Endothelial cell of umbilical vein (primary cell): ENCODE measurements at regions of chr2 and their contacts with region 1.

Region 1: DNA sequence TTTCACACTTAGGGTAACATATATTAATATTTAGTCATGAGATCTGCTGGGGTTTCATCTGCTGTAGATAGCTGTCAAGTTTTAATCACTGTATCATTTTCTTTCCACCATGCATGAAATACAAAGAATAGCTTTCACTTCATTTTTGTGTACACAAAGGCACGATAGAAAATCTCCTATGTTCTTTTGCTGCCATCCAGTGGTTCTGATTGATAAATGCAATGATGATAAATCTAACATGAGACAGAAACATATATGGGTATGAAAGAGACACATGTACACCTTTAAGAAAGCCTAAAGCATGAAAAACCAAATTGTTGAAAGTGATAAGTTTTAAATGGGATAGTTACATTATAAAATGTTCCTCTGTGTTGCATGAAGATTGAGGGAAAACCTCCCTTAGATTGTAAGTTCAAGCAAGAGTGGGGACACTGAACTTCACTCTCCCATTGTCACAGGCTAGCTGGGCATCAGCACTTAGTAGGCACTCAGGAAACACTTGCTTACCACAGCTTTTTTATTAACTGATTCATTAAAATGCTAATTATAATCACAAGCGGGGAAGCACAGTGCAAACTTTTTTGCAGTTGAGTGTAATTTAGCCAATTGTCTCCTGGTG is 31.2 kb downstream of the C1D start:
- DNase-seq: peak; percentile 79
- H3K4me3 ChIP-seq: no peak overlapping the region
- H3K27ac ChIP-seq: no peak overlapping the region
- H3K4me1 ChIP-seq: peaks cover 6% of the 10 kb centered on the region
- H3K27me3 ChIP-seq: no peaks in the 10 kb centered on the region
- CTCF ChIP-seq: peak; percentile 19 to 34
- POLR2A ChIP-seq: no peak

Region 2: GRCh38 chr2:66429071-66429477 is 1602.6 kb before region 1 on chr2:
- CTCF ChIA-PET with region 1: interaction called, 27 read pairs
- POLR2A ChIA-PET with region 1: no interaction called
- dilution Hi-C with region 1: no loop called
- intact Hi-C with region 1: loop called (anchors 5 kb)
- DNase-seq: peak; percentile 74
- H3K4me3 ChIP-seq: no peak overlapping the region
- H3K27ac ChIP-seq: no peak overlapping the region
- H3K4me1 ChIP-seq: peaks cover 9% of the 10 kb centered on the region
- H3K27me3 ChIP-seq: peaks cover 46 to 50% of the 10 kb centered on the region in 2 experiments
- CTCF ChIP-seq: peak; percentile 78
- POLR2A ChIP-seq: no peak

Region 3: DNA sequence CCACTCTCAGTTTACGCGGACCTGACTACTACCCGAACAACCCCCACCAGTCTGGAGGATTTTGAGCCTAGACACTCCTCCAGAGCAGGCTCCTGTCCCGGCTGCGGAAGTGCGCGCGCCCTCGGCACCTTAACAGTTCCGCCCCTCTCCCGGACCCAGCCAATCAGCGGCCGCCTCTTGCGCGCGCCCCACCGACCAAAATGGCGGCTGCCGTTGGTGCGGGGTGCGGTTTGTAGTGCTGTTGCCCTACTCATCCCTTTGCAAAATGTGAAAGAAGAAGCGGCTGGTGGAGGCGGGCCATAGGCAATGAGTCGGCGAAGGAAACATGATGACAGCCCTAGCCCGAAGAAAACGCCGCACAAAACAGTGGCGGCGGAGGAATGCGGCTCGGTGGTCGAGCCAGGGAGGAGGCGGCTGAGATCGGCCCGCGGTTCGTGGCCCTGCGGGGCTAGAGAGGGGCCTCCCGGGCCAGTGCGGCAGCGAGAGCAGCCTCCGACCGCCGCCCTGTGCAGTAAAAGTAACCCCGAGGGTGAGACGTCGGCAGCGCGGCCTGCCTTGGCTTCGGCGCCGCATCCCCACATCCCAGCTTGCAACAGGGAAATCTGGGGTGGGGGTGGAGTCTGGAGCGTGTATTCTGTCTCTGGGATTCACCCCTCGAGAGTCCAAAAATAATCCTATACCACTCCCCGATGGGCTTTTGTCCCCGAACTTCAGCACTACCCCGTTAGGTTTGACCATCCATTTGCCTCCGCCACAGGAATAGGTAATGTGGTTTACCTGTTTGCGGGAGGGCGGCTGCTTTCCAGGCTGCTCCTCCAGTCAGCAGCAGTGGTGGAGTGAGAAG is 634.3 kb before region 1 on chr2 and contains the start of gene ETAA1:
- CTCF ChIA-PET with region 1: interaction called, 7 read pairs
- POLR2A ChIA-PET with region 1: no interaction called
- dilution Hi-C with region 1: no loop called
- intact Hi-C with region 1: loop called (anchors 5 kb)
- DNase-seq: peak; percentile 88
- H3K4me3 ChIP-seq: peak within 1 kb of the TSS; percentile 89 to 93 (median 90)
- H3K27ac ChIP-seq: peak within 1 kb of the TSS; percentile 83
- H3K4me1 ChIP-seq: peaks cover 65% of the 10 kb centered on the region
- H3K27me3 ChIP-seq: no peaks in the 10 kb centered on the region
- CTCF ChIP-seq: no peak
- POLR2A ChIP-seq: peak; percentile 70
- total RNA-seq, gene ETAA1: 15.9 and 17.5 TPM in 2 replicates

Region 4: DNA sequence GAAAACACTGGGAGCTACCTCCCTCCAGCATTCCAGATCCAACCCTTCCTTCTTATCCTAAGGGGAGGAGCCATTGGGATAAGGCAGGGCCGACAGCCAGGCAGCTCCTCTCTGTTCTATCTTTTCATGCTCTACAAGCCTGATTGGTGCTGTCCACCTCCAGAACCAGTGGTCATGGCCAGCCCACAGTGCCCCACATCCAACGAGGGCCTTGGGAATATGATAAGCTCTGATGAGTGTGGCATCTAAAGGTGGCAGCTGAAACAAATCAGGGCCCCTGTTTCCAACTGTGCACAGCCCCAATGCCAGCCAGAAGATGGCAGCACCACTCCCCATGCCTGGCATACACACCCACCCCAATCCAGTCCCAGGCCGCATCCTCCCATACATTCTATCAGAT is 298.1 kb before region 1 on chr2:
- CTCF ChIA-PET with region 1: interaction called, 156 read pairs
- POLR2A ChIA-PET with region 1: no interaction called
- dilution Hi-C with region 1: no loop called
- intact Hi-C with region 1: loop called (anchors 1 kb)
- DNase-seq: peak; percentile 55
- H3K4me3 ChIP-seq: no peak overlapping the region
- H3K27ac ChIP-seq: no peak overlapping the region
- H3K4me1 ChIP-seq: no peaks in the 10 kb centered on the region
- H3K27me3 ChIP-seq: no peaks in the 10 kb centered on the region
- CTCF ChIP-seq: peak; percentile 32 to 82
- POLR2A ChIP-seq: no peak

Region 5: DNA sequence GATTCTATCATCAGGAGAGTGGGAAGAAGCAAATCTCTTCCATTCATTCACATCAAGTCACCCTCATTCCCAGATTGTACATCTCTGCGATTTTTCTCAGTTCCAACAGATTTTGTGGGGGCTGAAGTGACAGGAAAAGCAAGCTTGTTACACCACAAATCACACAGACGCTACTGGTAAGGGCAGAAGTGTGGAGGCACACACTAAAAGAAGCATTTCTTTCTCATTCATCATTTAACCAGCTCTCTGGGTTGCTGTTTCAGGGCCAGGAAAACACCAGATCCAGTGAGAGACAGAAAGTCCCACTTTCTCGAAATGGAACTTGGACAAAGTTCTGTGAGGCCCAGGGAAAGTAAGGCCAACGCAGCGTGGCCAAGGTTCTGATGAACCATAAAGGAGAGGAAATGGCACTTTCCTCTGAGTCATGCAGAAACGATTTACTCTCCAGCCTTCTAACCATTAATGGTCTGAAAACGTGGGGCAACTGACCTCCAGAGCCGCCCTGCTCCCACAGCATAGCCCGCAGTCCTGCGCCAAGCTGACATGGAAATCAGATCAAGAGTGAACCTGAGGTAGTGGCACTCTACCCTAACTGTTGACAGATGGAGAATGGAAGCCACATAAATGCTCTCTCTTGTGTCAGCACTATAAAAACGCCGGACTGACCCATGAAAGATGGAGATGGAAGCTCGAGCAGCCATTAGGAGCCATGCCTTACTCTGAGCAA is 159.8 kb before region 1 on chr2:
- CTCF ChIA-PET with region 1: interaction called, 42 read pairs
- POLR2A ChIA-PET with region 1: no interaction called
- dilution Hi-C with region 1: no loop called
- intact Hi-C with region 1: loop called (anchors 1 kb)
- DNase-seq: peak; percentile 84
- H3K4me3 ChIP-seq: peak overlapping the region in 1 of 3 experiments; percentile 37
- H3K27ac ChIP-seq: peak overlapping the region; percentile 100
- H3K4me1 ChIP-seq: peaks cover 38% of the 10 kb centered on the region
- H3K27me3 ChIP-seq: no peaks in the 10 kb centered on the region
- CTCF ChIP-seq: no peak
- POLR2A ChIP-seq: no peak

Region 6: GRCh38 chr2:67997528-67997900 is 34.1 kb before region 1 on chr2:
- CTCF ChIA-PET with region 1: interaction called, 16 read pairs
- POLR2A ChIA-PET with region 1: no interaction called
- dilution Hi-C with region 1: no loop called
- intact Hi-C with region 1: no loop called
- DNase-seq: peak; percentile 87
- H3K4me3 ChIP-seq: peak overlapping the region in 1 of 3 experiments; percentile 19
- H3K27ac ChIP-seq: peak overlapping the region; percentile 93
- H3K4me1 ChIP-seq: peaks cover 17% of the 10 kb centered on the region
- H3K27me3 ChIP-seq: no peaks in the 10 kb centered on the region
- CTCF ChIP-seq: no peak
- POLR2A ChIP-seq: no peak

Region 7: DNA sequence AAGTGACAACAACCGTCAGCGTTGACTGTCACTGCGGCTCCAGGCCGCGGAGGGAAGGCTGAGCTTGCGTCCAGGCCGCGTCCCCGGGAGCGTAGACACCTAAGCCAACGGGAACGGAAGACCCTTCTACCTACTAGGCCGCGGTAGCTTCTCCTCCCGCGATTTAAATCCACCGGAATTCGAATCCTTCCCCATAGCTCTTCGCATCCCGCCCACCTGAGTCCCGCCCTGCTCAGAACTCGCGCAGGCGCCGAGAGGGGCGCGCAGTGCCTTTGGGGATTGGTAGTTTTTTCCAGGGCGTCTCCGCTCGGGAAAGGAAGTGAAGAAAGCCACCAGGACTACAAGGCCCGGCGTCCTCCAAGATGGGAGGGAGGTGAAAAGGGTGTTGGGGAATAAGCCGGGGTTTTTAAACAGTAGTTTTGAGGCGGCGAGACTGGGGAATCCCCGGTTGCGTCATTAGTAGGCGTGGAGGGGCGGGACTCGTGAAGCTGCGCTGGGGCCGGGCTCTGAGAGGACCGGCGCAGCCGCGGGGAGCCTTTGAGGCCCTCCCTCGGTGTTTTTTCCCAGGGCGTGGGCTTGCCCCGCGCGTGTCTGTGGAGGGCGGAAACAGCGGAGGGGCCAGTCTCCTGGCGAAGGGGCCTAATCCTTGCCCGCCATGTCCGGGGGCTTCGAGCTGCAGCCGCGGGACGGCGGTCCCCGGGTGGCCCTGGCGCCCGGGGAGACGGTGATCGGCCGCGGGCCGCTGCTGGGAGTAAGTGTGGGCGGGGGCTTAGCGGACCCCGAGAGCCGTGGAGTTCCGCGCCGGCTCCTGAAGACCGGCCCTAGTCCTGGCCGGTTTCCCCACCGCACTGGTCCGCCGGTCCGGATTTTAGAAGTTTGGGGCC is 435.7 kb after region 1 on chr2 and contains the starts of genes APLF and FBXO48:
- CTCF ChIA-PET with region 1: no interaction called
- POLR2A ChIA-PET with region 1: no interaction called
- dilution Hi-C with region 1: no loop called
- intact Hi-C with region 1: no loop called
- DNase-seq: peak; percentile 99
- H3K4me3 ChIP-seq: peak within 1 kb of the TSS; percentile 80 to 94 (median 85)
- H3K27ac ChIP-seq: peak within 1 kb of the TSS; percentile 74
- H3K4me1 ChIP-seq: peaks cover 7% of the 10 kb centered on the region
- H3K27me3 ChIP-seq: no peaks in the 10 kb centered on the region
- CTCF ChIP-seq: no peak
- POLR2A ChIP-seq: peak; percentile 68
- total RNA-seq, gene APLF: 2.3 and 2.4 TPM in 2 replicates
- total RNA-seq, gene FBXO48: 0.73 and 0.83 TPM in 2 replicates